Activated CD8-positive, alpha-beta T cell treated with anti-CD3 and anti-CD28 coated beads, Interleukin-2, amount 10 ng/mL, durations not matched to agents 7 days and 5 days (primary cell): ENCODE measurements at regions of chr3 and their contacts with region 1.

Region 1: GRCh38 chr3:50350527-50351322 is at the starts of genes CYB561D2 and NPRL2:
- DNase-seq: peak; percentile 99
- ATAC-seq: peak; percentile 92
- H3K4me3 Mint-ChIP-seq: peak within 1 kb of the TSS; percentile 96
- H3K27ac Mint-ChIP-seq: peak within 1 kb of the TSS; percentile 99
- H3K4me1 Mint-ChIP-seq: peaks cover 68% of the 10 kb centered on the region
- H3K27me3 Mint-ChIP-seq: no peaks in the 10 kb centered on the region
- total RNA-seq, gene CYB561D2: 42.5 to 43.6 TPM
- total RNA-seq, gene NPRL2: 59.8 to 60.3 TPM

Region 2: GRCh38 chr3:50388016-50388719 is 37.4 kb after region 1 on chr3:
- CTCF ChIA-PET with region 1: no interaction called
- POLR2A ChIA-PET with region 1: no interaction called
- DNase-seq: no peak
- ATAC-seq: no peak
- H3K4me3 Mint-ChIP-seq: no peak overlapping the region
- H3K27ac Mint-ChIP-seq: no peak overlapping the region
- H3K4me1 Mint-ChIP-seq: peaks cover 13% of the 10 kb centered on the region
- H3K27me3 Mint-ChIP-seq: no peaks in the 10 kb centered on the region

Region 3: DNA sequence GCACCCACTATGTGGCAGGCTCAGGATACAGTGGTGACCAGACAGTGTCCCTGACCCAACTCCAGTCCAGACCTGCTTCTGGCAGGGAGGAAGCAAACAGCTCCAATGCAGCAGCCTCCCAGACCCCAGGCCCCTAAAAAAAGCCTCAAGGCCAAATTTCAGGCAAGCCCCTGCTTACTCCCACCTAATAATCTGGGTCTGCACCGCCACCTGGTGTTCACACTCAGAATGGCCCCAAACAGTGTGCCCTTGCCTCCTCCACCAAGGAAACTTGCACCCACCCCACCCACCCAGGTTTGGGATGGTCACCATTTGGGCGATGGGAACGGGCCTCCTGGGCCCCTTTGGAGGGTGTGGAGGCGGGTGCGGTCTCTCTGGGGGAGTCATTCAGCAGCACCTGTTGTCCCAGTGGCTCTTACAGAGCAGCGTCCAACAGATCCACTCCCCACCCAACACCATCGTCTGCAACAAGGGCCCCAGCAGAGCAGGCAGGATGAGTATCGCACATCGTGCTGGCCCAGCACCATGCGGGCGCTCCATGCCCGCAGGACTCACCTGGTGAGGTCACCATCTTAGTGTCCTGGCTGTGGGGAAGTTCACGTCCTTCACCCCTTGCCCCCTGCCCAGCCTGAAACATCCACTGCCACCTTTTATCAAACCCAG is 199.5 kb after region 1 on chr3:
- CTCF ChIA-PET with region 1: interaction called, 31 read pairs
- POLR2A ChIA-PET with region 1: no interaction called
- DNase-seq: peak; percentile 80
- ATAC-seq: peak; percentile 80
- H3K4me3 Mint-ChIP-seq: no peak overlapping the region
- H3K27ac Mint-ChIP-seq: no peak overlapping the region
- H3K4me1 Mint-ChIP-seq: peaks cover 13% of the 10 kb centered on the region
- H3K27me3 Mint-ChIP-seq: no peaks in the 10 kb centered on the region